Right ventricle myocardium inferior (tissue), 1 donor: ENCODE measurements at regions of chrX and their contacts with region 1.

Region 1: GRCh38 chrX:47129157-47129898 is 15.2 kb downstream of the NDUFB11 start:
- DNase-seq: peak; percentile 93
- ATAC-seq: peak; percentile 99

Region 2: DNA sequence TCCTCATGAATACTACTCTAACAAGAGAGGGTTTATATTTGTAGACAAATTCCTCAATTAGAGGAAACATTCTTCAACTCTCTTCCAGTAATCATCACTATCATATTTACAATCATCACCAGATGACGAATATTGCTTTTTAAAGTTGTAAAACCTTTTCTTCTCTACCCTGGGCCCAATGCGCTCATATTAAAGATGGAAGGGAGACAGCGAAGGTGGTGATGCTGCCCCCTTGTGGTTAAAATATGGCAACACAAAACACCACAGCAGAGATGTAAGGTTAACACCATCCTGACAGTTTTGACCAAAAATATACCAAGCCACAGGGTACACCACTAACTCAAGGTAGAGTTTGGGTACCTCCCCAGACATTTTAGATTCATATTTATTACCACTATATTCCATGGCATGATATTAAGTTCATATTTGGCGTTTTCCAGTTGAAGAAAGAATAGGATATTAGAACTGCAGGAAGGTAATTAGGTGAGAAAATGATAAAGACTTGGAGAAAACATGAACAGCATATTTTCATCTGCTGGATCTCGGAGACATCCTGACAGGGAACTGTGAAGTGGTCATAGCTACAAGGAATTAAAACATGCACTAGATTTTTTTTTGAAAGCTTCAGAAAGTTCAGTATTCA is 443.2 kb before region 1 on chrX:
- intact Hi-C with region 1: no loop called
- DNase-seq: no peak
- ATAC-seq: no peak

Region 3: GRCh38 chrX:46777971-46778810 is 351.1 kb before region 1 on chrX:
- intact Hi-C with region 1: no loop called
- DNase-seq: no peak
- ATAC-seq: no peak

Region 4: DNA sequence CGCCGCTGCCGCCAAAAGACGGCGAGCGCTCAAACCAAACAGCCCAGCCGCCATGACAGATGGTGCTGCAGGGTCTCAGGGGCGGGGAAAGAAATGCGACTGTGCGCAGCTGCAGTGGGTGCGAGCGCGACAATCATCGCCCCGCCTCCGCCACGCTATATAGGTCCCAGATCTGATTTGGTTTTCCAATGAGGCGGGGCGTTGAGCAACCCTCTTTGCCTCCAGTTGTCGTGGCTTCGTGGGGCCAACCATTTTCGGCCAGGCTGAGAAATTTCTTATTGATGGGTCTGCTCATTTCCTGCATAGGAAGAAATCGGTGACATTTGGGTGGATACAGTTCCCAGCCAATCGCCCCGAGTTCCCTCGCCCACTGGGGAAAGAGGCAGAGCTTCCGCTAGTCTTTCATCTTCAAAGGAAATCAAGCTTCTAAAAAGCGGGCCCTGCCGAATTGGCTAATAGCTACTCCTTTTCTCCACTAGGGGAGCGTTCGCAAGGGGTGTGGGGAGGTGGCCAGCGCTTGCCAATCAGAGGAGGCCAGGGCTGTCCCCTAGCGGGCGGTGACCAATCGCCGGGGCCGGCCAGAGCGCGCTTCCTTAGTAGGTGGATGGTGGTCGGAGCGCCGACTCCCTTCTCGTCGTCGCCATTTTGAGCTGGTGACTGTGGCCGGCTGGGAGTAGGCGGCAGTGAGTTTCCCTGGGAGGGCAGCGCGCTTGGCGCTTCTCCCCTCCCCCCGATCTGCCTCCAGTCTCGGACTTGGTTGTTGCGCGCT is 15.5 kb after region 1 on chrX and contains the starts of genes NDUFB11 and RBM10:
- intact Hi-C with region 1: loop called (anchors 2 kb)
- DNase-seq: peak; percentile 97
- ATAC-seq: peak; percentile 98
- total RNA-seq, gene NDUFB11: 212 TPM
- total RNA-seq, gene RBM10: 28.5 TPM